ENCODE measurements at regions of chr7 and their contacts with region 1.

Region 1: DNA sequence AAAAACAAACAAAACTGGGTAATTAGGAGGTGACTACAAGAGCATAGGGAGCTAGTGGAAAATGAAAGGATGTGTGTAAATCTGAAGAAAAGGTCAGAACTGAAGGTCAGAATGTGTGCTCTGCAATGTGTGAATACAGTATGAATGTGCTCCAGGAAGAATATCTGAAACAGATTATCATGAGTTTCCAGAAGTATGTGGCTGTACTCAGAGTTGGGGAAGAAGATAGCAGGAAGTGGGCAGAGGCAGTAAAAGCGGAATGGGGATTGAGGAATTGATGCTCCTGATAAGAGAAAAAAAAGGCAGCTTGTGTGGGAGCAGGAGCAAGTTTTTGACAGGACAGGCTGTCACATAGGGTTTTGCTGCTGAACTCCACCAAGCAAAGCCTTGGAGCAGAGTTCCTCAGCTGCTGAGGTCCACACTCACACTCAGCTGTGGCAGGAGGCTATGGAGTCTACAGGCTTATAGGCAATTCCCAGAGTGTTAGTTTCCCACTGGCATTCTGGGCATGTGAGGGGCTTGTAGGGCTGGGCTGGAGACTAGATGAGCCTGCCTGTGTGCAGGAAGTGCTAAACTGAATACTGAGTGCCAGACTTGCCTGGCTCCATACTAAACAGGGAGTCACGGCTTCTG is 22.9 kb downstream of the H2AZ2 start:
- DNase-seq: peak; percentile 55
- H3K4me3 ChIP-seq: no peak overlapping the region
- H3K27me3 ChIP-seq: no peaks in the 10 kb centered on the region
- CTCF ChIP-seq: no peak

Region 2: GRCh38 chr7:44838751-44839150 is 13.7 kb after region 1 on chr7:
- CTCF ChIA-PET with region 1: interaction called, 10 read pairs
- POLR2A ChIA-PET with region 1: no interaction called
- DNase-seq: no peak
- H3K4me3 ChIP-seq: no peak overlapping the region
- H3K27me3 ChIP-seq: no peaks in the 10 kb centered on the region
- CTCF ChIP-seq: no peak

Region 3: DNA sequence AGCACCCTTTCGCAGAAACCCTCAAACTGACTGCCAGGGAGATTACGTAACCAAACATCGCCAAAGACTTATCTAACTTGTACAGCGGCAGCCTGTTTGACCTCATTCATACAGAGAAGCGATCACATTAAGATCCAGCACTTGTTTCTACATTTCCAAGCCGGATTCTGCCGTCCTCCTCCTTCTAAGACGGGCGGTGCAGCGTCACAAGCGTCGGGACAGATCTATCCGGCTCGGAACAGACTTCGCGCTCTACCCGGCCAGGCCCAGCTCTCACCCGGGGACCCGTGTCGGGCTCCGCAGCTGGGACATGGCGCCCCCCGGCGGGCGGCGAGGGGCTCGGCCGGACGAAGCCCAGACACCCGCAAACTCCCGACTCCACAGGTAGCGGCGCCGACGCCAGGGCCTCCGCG is 22.5 kb after region 1 on chr7:
- CTCF ChIA-PET with region 1: interaction called, 18 read pairs
- POLR2A ChIA-PET with region 1: no interaction called
- DNase-seq: peak; percentile 37
- H3K4me3 ChIP-seq: peak overlapping the region; percentile 62
- H3K27me3 ChIP-seq: no peaks in the 10 kb centered on the region
- CTCF ChIP-seq: peak; percentile 80

Measured in BJ (cell line).